CD4-positive, alpha-beta memory T cell (primary cell): ENCODE measurements at regions of chr10 and their contacts with region 1.

Region 1: GRCh38 chr10:119305860-119306513 is 98.6 kb downstream of the GRK5 start:
- DNase-seq: peak; percentile 78 to 98 (median 81)
- H3K4me3 ChIP-seq: peak overlapping the region; percentile 66 to 70
- H3K4me3 Mint-ChIP-seq: peak overlapping the region; percentile 87 to 94 (median 90)
- H3K27ac ChIP-seq: peak overlapping the region; percentile 75
- H3K27ac Mint-ChIP-seq: peak overlapping the region; percentile 96 to 99 (median 98)
- H3K4me1 ChIP-seq: peaks cover 62% of the 10 kb centered on the region
- H3K4me1 Mint-ChIP-seq: peaks cover 46 to 76% (median 63%) of the 10 kb centered on the region in 4 donors
- H3K27me3 ChIP-seq: no peaks in the 10 kb centered on the region
- H3K27me3 Mint-ChIP-seq: peaks cover 0 to 6% of the 10 kb centered on the region in 2 donors

Region 2: GRCh38 chr10:119270762-119271366 is 35.1 kb before region 1 on chr10:
- CTCF ChIA-PET with region 1: interaction called, 5 read pairs
- POLR2A ChIA-PET with region 1: interaction called, 58 read pairs
- intact Hi-C with region 1: loop called (anchors 1 kb)
- DNase-seq: peak in 3 of 5 donors; percentile 43 to 63 (median 58)
- H3K4me3 ChIP-seq: no peak overlapping the region
- H3K4me3 Mint-ChIP-seq: peak overlapping the region; percentile 45 to 80 (median 66)
- H3K27ac ChIP-seq: peak overlapping the region; percentile 93
- H3K27ac Mint-ChIP-seq: peak overlapping the region; percentile 96 to 100 (median 99)
- H3K4me1 ChIP-seq: peaks cover 69% of the 10 kb centered on the region
- H3K4me1 Mint-ChIP-seq: peaks cover 28 to 84% (median 65%) of the 10 kb centered on the region in 4 donors
- H3K27me3 ChIP-seq: no peaks in the 10 kb centered on the region
- H3K27me3 Mint-ChIP-seq: no peaks in the 10 kb centered on the region

Region 3: GRCh38 chr10:119289227-119289920 is 16.6 kb before region 1 on chr10:
- CTCF ChIA-PET with region 1: interaction called, 5 read pairs
- POLR2A ChIA-PET with region 1: interaction called, 14 read pairs
- intact Hi-C with region 1: loop called (anchors 1 kb)
- DNase-seq: no peak
- H3K4me3 ChIP-seq: no peak overlapping the region
- H3K4me3 Mint-ChIP-seq: peak overlapping the region; percentile 17 to 72 (median 44)
- H3K27ac ChIP-seq: no peak overlapping the region
- H3K27ac Mint-ChIP-seq: peak overlapping the region in 6 of 7 donors; percentile 5 to 93 (median 80)
- H3K4me1 ChIP-seq: peaks cover 83% of the 10 kb centered on the region
- H3K4me1 Mint-ChIP-seq: peaks cover 55 to 92% (median 72%) of the 10 kb centered on the region in 4 donors
- H3K27me3 ChIP-seq: no peaks in the 10 kb centered on the region
- H3K27me3 Mint-ChIP-seq: no peaks in the 10 kb centered on the region

Region 4: DNA sequence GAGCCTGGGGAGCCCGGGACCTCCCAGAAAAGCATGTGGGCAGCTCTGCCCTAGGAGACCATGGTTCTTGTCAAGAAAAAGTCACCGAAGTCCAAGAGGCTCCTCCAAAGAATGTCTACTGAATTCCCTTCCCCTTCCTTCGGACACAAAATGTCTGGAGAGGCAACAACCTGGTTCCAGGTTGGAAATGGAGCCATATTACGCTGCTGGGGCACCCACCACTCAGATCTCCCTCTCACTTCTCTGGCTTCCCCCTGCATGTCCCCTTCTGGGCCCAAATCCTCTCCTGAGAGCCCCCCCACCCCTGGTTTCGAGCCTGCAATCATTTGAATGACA is 184.0 kb after region 1 on chr10:
- CTCF ChIA-PET with region 1: no interaction called
- POLR2A ChIA-PET with region 1: interaction called, 4 read pairs
- intact Hi-C with region 1: loop called (anchors 2 kb)
- DNase-seq: no peak
- H3K4me3 ChIP-seq: peak overlapping the region in 1 of 2 donors; percentile 51
- H3K4me3 Mint-ChIP-seq: peak overlapping the region; percentile 18 to 92 (median 88)
- H3K27ac ChIP-seq: peak overlapping the region; percentile 68
- H3K27ac Mint-ChIP-seq: peak overlapping the region; percentile 82 to 97 (median 95)
- H3K4me1 ChIP-seq: peaks cover 45% of the 10 kb centered on the region
- H3K4me1 Mint-ChIP-seq: peaks cover 25 to 50% (median 33%) of the 10 kb centered on the region in 4 donors
- H3K27me3 ChIP-seq: no peaks in the 10 kb centered on the region
- H3K27me3 Mint-ChIP-seq: no peaks in the 10 kb centered on the region